GM12878 (cell line): ENCODE measurements at regions of chr14 and their contacts with region 1.

Region 1: DNA sequence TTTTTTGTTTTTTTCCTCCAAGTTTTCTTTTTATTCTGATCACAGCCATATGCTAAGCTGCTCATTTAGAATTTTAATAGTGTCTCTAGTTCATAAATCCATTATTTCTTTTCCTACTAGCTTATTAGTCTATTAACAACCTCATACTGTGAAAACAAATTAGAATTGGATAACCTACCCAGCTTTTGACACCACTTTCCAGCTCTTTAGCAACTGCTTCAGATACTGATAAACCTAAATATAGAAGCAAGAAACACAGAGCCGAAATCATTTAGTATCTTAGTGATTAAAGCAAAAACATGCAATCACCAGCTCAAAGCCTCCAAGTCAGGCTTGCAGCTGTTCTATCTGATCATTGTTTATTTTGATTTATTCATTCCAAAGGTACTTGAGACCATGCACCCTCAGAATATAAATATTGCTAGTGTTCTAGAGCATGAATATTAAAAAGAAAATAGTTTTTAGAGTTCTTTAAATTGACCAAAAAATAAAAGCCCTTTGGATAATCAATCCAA is 121.5 kb downstream of the STXBP6 start:
- DNase-seq: no peak
- ATAC-seq: no peak
- H3K4me3 ChIP-seq: no peak overlapping the region
- H3K27ac ChIP-seq: no peak overlapping the region
- H3K4me1 ChIP-seq: no peaks in the 10 kb centered on the region
- H3K27me3 ChIP-seq: no peaks in the 10 kb centered on the region
- CTCF ChIP-seq: no peak
- EP300 ChIP-seq: no peak
- POLR2A ChIP-seq: no peak
- RAD21 ChIP-seq: no peak

Region 2: GRCh38 chr14:24941719-24942118 is 13.3 kb after region 1 on chr14:
- CTCF ChIA-PET with region 1: interaction called, 37 read pairs
- POLR2A ChIA-PET with region 1: interaction called, 8 read pairs
- RAD21 ChIA-PET with region 1: interaction called, 8 read pairs
- SMC1A ChIA-PET with region 1: interaction called, 61 read pairs
- in situ Hi-C with region 1: no loop called
- intact Hi-C with region 1: no loop called
- DNase-seq: no peak
- ATAC-seq: peak; percentile 36
- H3K4me3 ChIP-seq: no peak overlapping the region
- H3K27ac ChIP-seq: peak overlapping the region; percentile 30; the same call in 1 of the 2 replicates
- H3K4me1 ChIP-seq: no peaks in the 10 kb centered on the region; the same call in none of the 2 replicates
- H3K27me3 ChIP-seq: no peaks in the 10 kb centered on the region
- CTCF ChIP-seq: no peak
- EP300 ChIP-seq: no peak
- POLR2A ChIP-seq: no peak
- RAD21 ChIP-seq: no peak

Region 3: GRCh38 chr14:25237845-25238244 is 309.4 kb after region 1 on chr14:
- CTCF ChIA-PET with region 1: no interaction called
- POLR2A ChIA-PET with region 1: no interaction called
- RAD21 ChIA-PET with region 1: no interaction called
- SMC1A ChIA-PET with region 1: no interaction called
- in situ Hi-C with region 1: no loop called
- intact Hi-C with region 1: no loop called
- DNase-seq: no peak
- ATAC-seq: peak; percentile 66; the same call in 2 of the 3 replicates
- H3K4me3 ChIP-seq: no peak overlapping the region
- H3K27ac ChIP-seq: no peak overlapping the region
- H3K4me1 ChIP-seq: no peaks in the 10 kb centered on the region
- H3K27me3 ChIP-seq: no peaks in the 10 kb centered on the region
- CTCF ChIP-seq: peak in 1 of 3 experiments; percentile 7; a peak in 1 of 6 replicates
- EP300 ChIP-seq: no peak
- POLR2A ChIP-seq: no peak
- RAD21 ChIP-seq: no peak